ENCODE measurements at regions of chr16 and their contacts with region 1.

Region 1: GRCh38 chr16:66650707-66651473 is 45.7 kb downstream of the CMTM4 start:
- DNase-seq: peak; percentile 89

Region 2: GRCh38 chr16:66639091-66639885 is 11.6 kb before region 1 on chr16:
- CTCF ChIA-PET with region 1: interaction called, 17 read pairs
- POLR2A ChIA-PET with region 1: interaction called, 7 read pairs
- DNase-seq: no peak

Measured in HEK293T (cell line).